ENCODE measurements at regions of chr4 and their contacts with region 1.

Region 1: GRCh38 chr4:123396307-123397143 is at the start of gene SPRY1:
- DNase-seq: peak; percentile 88
- H3K4me3 Mint-ChIP-seq: peak within 1 kb of the TSS; percentile 87
- H3K27ac Mint-ChIP-seq: peak within 1 kb of the TSS; percentile 83
- H3K4me1 Mint-ChIP-seq: peaks cover 18% of the 10 kb centered on the region
- H3K27me3 Mint-ChIP-seq: peaks cover 15% of the 10 kb centered on the region
- total RNA-seq, gene SPRY1: 16.9 to 20.3 TPM

Region 2: DNA sequence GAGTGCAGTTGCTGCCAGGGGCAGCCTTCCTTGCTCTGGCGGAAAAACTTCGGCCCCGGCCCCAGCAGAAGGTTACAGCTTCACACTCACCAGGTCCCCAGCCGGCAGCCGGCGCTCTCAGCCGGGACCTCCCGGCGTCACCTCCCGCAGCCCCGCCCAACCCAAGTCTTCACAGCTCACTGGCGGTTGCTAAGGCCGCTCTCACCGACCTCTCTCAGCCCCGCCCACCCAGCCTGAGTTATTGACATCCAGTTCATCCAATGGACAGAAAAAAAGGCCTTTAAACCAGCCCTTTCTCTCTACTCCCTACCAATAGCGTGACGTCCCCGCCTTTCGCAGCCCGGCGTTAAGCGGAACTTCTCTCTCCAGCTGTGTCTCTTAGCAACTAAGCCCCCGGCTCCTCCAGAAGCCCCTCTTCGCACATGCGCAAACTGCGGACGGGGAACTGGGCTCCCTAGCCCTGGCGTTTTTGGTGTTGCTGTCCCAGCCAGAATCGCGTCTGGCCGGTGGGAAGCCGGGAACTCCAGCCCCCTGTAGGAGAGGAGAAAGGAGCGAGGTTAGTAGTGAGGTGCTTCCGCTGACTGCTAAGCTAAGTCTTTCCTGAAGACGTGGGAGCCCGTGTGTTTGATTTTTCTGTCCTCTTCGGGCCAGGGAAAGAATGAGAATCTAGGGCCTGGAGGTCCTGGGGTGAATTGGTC is 664.0 kb before region 1 on chr4 and contains the start of gene BBS12:
- CTCF ChIA-PET with region 1: no interaction called
- intact Hi-C with region 1: loop called (anchors 1 kb)
- DNase-seq: peak; percentile 100
- H3K4me3 Mint-ChIP-seq: peak within 1 kb of the TSS; percentile 91
- H3K27ac Mint-ChIP-seq: peak within 1 kb of the TSS; percentile 83
- H3K4me1 Mint-ChIP-seq: peaks cover 17% of the 10 kb centered on the region
- H3K27me3 Mint-ChIP-seq: no peaks in the 10 kb centered on the region
- total RNA-seq, gene BBS12: 1.7 to 2.2 TPM

Region 3: GRCh38 chr4:123102897-123103471 is 293.5 kb before region 1 on chr4:
- CTCF ChIA-PET with region 1: no interaction called
- intact Hi-C with region 1: loop called (anchors 5 kb)
- DNase-seq: no peak
- H3K4me3 Mint-ChIP-seq: no peak overlapping the region
- H3K27ac Mint-ChIP-seq: no peak overlapping the region
- H3K4me1 Mint-ChIP-seq: no peaks in the 10 kb centered on the region
- H3K27me3 Mint-ChIP-seq: no peaks in the 10 kb centered on the region

Region 4: DNA sequence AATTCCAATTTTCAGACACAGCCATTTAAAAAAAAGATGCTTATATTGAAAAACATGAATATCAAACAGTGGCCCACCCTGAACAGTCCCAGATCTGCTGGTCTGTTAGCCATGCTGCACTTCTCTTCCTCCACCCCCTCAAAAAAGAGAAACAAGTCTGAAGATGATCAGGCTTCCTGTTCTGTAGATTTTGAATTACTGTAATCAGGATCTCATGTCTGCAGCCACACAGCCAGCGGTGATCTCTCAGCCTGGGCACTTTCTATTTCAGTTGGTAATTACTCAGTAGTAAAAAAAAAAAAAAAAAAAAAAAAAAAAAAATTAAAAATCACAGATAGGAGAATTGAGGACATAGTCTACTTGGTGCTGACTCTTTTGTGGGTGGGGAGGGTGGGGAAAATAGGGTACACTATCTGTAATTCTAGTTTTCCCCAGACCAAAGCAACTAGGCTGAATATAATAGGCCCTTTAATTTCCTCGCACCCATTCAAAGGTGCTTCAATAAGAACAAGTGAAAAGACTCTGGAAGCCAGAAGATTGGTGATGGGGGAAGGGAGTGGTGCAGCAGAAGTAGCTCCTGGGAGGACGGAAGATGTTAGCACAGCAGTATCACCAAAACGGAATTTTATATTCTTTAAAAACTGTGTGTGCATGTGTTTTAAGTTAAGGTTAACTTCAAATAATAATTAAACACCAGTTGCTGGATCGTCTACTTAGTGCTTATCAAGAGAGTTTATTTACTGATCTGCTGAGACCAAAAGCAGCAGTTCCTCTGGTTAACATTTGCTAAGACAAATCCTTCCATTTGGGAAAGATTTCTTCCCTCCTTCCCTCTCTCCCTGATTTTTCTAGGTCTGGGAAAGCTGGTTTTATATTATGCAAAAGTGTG is 47.1 kb after region 1 on chr4:
- CTCF ChIA-PET with region 1: no interaction called
- intact Hi-C with region 1: loop called (anchors 1 kb)
- DNase-seq: peak; percentile 65
- H3K4me3 Mint-ChIP-seq: peak overlapping the region; percentile 37
- H3K27ac Mint-ChIP-seq: peak overlapping the region; percentile 74
- H3K4me1 Mint-ChIP-seq: peaks cover 16% of the 10 kb centered on the region
- H3K27me3 Mint-ChIP-seq: peaks cover 2% of the 10 kb centered on the region

Region 5: GRCh38 chr4:123599920-123600810 is 203.6 kb after region 1 on chr4:
- CTCF ChIA-PET with region 1: no interaction called
- intact Hi-C with region 1: loop called (anchors 5 kb)
- DNase-seq: peak; percentile 48
- H3K4me3 Mint-ChIP-seq: no peak overlapping the region
- H3K27ac Mint-ChIP-seq: no peak overlapping the region
- H3K4me1 Mint-ChIP-seq: peaks cover 19% of the 10 kb centered on the region
- H3K27me3 Mint-ChIP-seq: no peaks in the 10 kb centered on the region

Region 6: GRCh38 chr4:123952520-123953274 is 556.2 kb after region 1 on chr4:
- CTCF ChIA-PET with region 1: no interaction called
- intact Hi-C with region 1: no loop called
- DNase-seq: no peak
- H3K4me3 Mint-ChIP-seq: no peak overlapping the region
- H3K27ac Mint-ChIP-seq: no peak overlapping the region
- H3K4me1 Mint-ChIP-seq: no peaks in the 10 kb centered on the region
- H3K27me3 Mint-ChIP-seq: no peaks in the 10 kb centered on the region

Region 7: DNA sequence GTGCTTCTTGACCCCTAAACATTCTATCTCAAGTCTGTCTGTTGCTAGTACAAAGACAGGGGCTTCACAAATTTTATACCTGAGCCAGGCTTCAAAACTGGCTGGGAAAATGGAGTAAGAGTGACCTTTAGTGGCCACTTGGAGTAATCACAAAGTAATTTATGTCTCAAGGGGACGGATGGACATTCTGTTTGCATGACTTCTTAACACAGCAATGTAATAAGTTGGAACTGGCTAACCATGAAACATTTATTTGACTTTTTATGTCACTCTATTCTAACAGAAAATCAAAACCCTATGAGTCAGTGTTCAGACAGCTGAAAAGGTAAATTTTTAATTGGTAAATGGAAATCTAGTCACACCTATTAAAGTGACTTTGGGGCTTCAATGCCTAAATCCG is 715.4 kb after region 1 on chr4:
- CTCF ChIA-PET with region 1: no interaction called
- intact Hi-C with region 1: loop called (anchors 10 kb)
- DNase-seq: no peak
- H3K4me3 Mint-ChIP-seq: no peak overlapping the region
- H3K27ac Mint-ChIP-seq: no peak overlapping the region
- H3K4me1 Mint-ChIP-seq: no peaks in the 10 kb centered on the region
- H3K27me3 Mint-ChIP-seq: no peaks in the 10 kb centered on the region